Activated naive CD4-positive, alpha-beta T cell treated with anti-CD3 and anti-CD28 coated beads for 36 hours (primary cell): ENCODE measurements at regions of chr17 and their contacts with region 1.

Region 1: GRCh38 chr17:73901661-73902415 is 257.6 kb upstream of the SDK2 start:
- DNase-seq: peak; percentile 52
- H3K4me3 Mint-ChIP-seq: peak overlapping the region; percentile 75
- H3K27ac Mint-ChIP-seq: no peak overlapping the region
- H3K4me1 Mint-ChIP-seq: peaks cover 6% of the 10 kb centered on the region
- H3K27me3 Mint-ChIP-seq: peaks cover 24% of the 10 kb centered on the region

Region 2: GRCh38 chr17:73719588-73720071 is 182.2 kb before region 1 on chr17:
- CTCF ChIA-PET with region 1: no interaction called
- intact Hi-C with region 1: loop called (anchors 5 kb)
- DNase-seq: no peak
- H3K4me3 Mint-ChIP-seq: no peak overlapping the region
- H3K27ac Mint-ChIP-seq: no peak overlapping the region
- H3K4me1 Mint-ChIP-seq: peaks cover 42% of the 10 kb centered on the region
- H3K27me3 Mint-ChIP-seq: no peaks in the 10 kb centered on the region

Region 3: DNA sequence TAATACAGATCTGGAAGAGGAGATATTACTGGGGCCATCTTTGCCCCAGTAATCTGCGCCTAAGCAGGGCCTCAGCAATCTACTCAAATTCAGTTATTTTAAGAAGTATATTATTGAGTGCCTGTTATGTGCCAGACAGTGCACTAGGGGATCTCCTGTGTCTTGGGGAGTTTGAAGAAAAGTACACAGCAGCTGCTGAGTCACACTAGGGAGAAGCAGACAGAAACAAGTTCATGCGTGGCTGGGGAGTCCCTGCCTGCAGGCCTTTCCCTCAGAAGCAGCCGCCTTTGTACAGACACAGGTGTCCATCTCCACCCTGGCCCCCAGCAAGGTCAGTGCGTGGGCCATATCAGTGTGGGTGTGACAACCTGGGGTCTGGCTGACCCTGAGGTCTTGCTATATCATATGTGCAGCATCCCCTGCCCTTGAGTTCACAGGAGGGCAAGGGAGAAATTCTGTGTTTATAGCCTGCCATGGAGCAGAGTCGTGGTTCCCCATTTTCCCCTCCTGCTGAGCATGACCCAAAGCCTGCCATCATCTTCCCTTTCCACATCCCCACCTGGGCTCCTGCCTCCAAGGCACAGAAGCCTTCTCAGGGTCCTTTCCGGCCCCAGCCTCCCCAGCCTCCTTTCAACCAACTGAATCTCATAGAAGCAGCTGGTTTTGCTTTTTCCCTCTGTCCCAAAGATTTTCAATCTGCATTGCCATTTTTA is 27.7 kb before region 1 on chr17:
- CTCF ChIA-PET with region 1: no interaction called
- intact Hi-C with region 1: loop called (anchors 2 kb)
- DNase-seq: peak; percentile 54
- H3K4me3 Mint-ChIP-seq: no peak overlapping the region
- H3K27ac Mint-ChIP-seq: peak overlapping the region; percentile 20
- H3K4me1 Mint-ChIP-seq: peaks cover 3% of the 10 kb centered on the region
- H3K27me3 Mint-ChIP-seq: no peaks in the 10 kb centered on the region

Region 4: GRCh38 chr17:73929860-73930430 is 28.1 kb after region 1 on chr17:
- CTCF ChIA-PET with region 1: no interaction called
- intact Hi-C with region 1: loop called (anchors 1 kb)
- DNase-seq: no peak
- H3K4me3 Mint-ChIP-seq: no peak overlapping the region
- H3K27ac Mint-ChIP-seq: no peak overlapping the region
- H3K4me1 Mint-ChIP-seq: peaks cover under 1% of the 10 kb centered on the region
- H3K27me3 Mint-ChIP-seq: peaks cover 2% of the 10 kb centered on the region